Mammary epithelial cell (primary cell): ENCODE measurements at regions of chr4 and their contacts with region 1.

Region 1: GRCh38 chr4:72430050-72430449 is 139.0 kb downstream of the ADAMTS3 start:
- DNase-seq: no peak
- H3K4me3 ChIP-seq: no peak overlapping the region
- H3K27ac ChIP-seq: no peak overlapping the region
- H3K4me1 ChIP-seq: no peaks in the 10 kb centered on the region
- H3K27me3 ChIP-seq: no peaks in the 10 kb centered on the region
- CTCF ChIP-seq: no peak

Region 2: GRCh38 chr4:72366601-72367000 is 63.4 kb before region 1 on chr4:
- CTCF ChIA-PET with region 1: no interaction called
- dilution Hi-C with region 1: loop called (anchors 5 kb)
- in situ Hi-C with region 1: no loop called
- intact Hi-C with region 1: no loop called
- DNase-seq: no peak
- H3K4me3 ChIP-seq: no peak overlapping the region
- H3K27ac ChIP-seq: no peak overlapping the region
- H3K4me1 ChIP-seq: no peaks in the 10 kb centered on the region
- H3K27me3 ChIP-seq: no peaks in the 10 kb centered on the region
- CTCF ChIP-seq: no peak

Region 3: GRCh38 chr4:72513227-72513626 is 83.2 kb after region 1 on chr4:
- CTCF ChIA-PET with region 1: no interaction called
- dilution Hi-C with region 1: no loop called
- in situ Hi-C with region 1: no loop called
- intact Hi-C with region 1: no loop called
- DNase-seq: no peak
- H3K4me3 ChIP-seq: no peak overlapping the region
- H3K27ac ChIP-seq: no peak overlapping the region
- H3K4me1 ChIP-seq: no peaks in the 10 kb centered on the region
- H3K27me3 ChIP-seq: peaks cover 2% of the 10 kb centered on the region
- CTCF ChIP-seq: no peak

Region 4: DNA sequence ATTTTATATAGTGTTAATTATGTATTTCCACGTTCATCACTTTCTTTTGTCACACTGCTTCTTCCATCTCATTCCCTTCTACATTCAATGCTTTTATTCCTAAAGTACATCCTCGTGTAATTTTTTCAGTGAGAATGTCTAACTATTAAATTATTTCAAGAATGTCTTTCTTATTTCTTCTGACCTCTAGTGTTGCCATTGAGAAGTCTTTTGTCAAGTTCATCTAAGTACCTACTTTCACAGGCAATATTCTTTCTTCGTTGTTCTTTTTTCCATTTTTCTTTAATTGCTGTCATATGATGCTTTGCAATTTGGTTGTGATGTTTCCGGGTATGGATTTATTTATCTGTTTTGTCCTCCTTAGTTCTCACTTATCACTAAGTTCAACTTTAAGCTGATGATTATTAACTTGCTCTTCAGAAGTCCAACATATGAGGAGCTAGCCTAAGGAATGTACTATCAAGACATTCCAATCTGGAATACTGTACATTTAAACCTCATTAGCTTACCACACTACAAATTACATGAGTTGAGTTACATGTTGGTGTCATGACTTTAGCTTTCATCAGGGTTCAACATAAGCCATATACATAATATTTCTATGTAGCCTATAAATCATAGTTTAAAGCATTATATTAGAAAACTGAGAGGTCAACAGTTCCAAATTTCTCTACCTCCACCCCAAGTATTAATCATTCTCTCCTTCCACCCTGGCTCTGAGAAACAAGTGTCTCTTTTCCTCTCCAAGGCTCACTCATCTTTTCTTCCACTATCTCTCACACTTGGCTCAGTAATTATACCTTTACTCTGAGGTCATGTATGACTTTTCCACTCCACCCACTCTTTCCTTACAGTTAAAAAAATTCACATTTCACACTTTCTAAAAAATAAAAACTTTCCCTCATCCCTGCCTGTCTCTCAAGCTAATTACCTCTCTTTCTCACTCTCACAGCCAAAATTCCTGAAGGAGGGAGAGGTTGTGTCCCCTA is 558.0 kb after region 1 on chr4:
- CTCF ChIA-PET with region 1: no interaction called
- dilution Hi-C with region 1: no loop called
- in situ Hi-C with region 1: no loop called
- intact Hi-C with region 1: no loop called
- DNase-seq: no peak
- H3K4me3 ChIP-seq: no peak overlapping the region
- H3K27ac ChIP-seq: no peak overlapping the region
- H3K4me1 ChIP-seq: no peaks in the 10 kb centered on the region
- H3K27me3 ChIP-seq: no peaks in the 10 kb centered on the region
- CTCF ChIP-seq: peak in 1 of 2 donors; percentile 2